ENCODE measurements at regions of chr2 and their contacts with region 1.

Region 1: DNA sequence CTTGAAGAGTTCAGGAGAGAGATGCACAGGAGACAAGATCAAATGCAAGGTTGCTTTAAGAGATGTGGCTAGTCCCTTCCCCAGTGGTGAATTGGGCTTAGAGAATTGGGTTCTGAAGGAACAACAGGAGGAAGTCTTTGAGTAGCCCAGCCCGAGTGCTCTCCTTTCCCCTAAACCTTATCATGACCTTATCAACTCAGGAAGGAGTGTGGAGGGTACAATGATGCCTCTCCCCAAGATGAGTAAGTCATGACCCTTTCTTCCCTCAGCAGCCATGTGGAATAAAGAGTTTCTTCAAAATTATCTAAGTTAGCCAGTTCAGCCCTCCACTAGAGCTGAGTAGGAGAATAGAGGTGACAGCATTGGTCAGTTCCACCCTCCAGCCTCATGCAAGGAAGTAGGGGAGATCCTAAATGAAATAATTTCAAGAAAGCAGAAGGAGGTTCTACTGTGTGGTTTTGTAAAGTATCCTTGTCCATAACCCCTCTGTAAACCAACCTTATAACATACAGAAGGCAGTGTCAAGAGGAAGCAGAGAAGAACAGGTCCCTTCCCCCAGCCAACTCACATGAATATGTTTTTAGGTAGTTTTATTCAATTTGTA is 88.4 kb downstream of the ARHGAP15 start:
- DNase-seq: no peak
- H3K4me3 ChIP-seq: no peak overlapping the region
- H3K4me3 Mint-ChIP-seq: no peak overlapping the region
- H3K27ac Mint-ChIP-seq: no peak overlapping the region
- H3K4me1 ChIP-seq: no peaks in the 10 kb centered on the region
- H3K4me1 Mint-ChIP-seq: no peaks in the 10 kb centered on the region
- H3K27me3 ChIP-seq: no peaks in the 10 kb centered on the region
- H3K27me3 Mint-ChIP-seq: peaks cover 2% of the 10 kb centered on the region
- CTCF ChIP-seq: no peak

Region 2: DNA sequence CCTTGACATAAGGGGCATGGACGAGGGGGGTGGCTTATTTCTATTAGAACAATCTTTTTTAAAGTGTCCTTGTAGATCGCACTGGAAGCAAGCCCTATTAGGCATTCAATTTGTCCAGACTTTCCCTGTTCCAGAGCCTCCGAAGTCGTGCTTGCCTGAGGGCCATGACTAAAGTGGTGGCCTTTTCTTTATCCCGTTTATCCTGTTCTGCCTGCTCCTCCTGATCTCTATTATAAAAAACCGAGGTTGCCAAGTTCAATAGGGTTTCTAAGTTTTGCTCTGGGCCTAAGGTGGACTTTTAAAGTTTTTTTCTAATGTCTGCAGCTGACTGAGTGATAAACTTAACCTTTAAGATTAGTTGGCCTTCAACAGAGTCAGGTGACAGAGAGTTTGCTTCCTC is 313.8 kb before region 1 on chr2:
- CTCF ChIA-PET with region 1: no interaction called
- POLR2A ChIA-PET with region 1: no interaction called
- intact Hi-C with region 1: no loop called
- DNase-seq: no peak
- H3K4me3 ChIP-seq: no peak overlapping the region
- H3K4me3 Mint-ChIP-seq: no peak overlapping the region
- H3K27ac Mint-ChIP-seq: no peak overlapping the region
- H3K4me1 ChIP-seq: no peaks in the 10 kb centered on the region
- H3K4me1 Mint-ChIP-seq: no peaks in the 10 kb centered on the region
- H3K27me3 ChIP-seq: no peaks in the 10 kb centered on the region
- H3K27me3 Mint-ChIP-seq: no peaks in the 10 kb centered on the region
- CTCF ChIP-seq: no peak

Region 3: DNA sequence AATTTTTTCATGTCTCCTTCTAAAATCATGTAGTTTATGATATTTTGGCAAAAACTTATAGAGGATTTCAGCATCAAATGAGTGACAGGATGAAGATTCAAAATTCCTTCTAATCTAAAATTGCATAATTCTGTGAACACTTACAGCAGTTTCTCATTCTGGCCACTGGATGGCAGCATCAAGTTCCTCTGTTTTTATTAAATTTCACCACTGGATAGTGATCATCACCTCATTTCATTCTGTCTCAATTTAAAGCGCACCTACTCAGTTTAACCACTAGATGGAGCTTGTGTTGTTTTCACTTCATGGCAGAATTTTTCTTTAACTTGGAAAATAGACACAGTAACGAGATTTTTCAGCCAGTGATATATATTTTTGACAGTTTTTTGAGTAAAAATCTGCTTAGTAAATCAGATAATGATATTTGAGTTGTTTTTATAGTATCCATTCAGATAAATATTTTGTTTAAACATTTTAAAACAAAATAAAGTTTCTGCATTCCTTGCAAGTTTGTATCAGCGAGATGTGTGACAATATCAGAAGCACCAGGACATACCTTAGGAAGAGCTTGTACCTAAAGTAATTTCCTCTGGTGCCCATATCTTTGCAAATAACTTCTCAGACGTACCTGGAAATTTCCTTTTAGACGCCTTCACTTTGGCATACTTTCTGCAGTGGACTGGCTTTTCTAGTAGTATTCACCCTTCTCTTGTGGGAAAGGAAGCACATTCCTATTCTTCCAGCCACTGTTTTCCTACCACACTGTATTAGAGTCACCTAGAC is 183.1 kb before region 1 on chr2:
- CTCF ChIA-PET with region 1: no interaction called
- POLR2A ChIA-PET with region 1: no interaction called
- intact Hi-C with region 1: loop called (anchors 1 kb)
- DNase-seq: peak; percentile 61 to 69
- H3K4me3 ChIP-seq: no peak overlapping the region
- H3K4me3 Mint-ChIP-seq: no peak overlapping the region
- H3K27ac Mint-ChIP-seq: no peak overlapping the region
- H3K4me1 ChIP-seq: peaks cover 12% of the 10 kb centered on the region
- H3K4me1 Mint-ChIP-seq: peaks cover 10% of the 10 kb centered on the region
- H3K27me3 ChIP-seq: no peaks in the 10 kb centered on the region
- H3K27me3 Mint-ChIP-seq: no peaks in the 10 kb centered on the region
- CTCF ChIP-seq: peak; percentile 93

Region 4: DNA sequence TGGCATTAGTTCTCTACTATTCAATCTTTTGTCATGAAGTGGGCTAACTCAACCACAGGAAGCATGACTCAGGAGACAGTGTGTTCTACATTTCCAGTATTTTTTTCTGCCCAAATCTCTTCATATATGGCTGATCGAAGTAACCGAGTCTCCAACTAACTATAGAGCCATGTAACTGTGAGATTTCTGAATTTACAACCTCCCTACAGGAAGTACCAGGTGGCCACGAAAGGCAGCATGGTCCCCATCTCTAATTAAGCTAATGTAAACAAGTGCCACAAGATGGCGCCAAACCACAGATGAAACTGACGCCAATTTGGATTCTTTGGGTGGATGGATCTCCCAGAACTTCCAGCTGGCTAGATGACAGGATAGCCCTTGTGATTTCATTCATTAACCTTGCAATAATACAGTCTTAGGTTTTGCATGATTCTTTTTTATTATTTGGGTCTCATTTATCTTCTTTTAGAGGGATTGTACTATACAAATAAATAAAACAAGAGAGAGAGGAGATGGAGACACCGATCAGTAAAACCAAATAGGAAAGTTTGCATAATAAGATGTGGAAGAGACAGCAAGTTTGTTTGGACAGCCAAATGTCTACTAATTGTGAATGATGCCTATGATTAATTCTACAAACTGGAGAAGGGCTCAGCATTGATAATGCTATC is 106.7 kb before region 1 on chr2:
- CTCF ChIA-PET with region 1: interaction called, 3 read pairs
- POLR2A ChIA-PET with region 1: no interaction called
- intact Hi-C with region 1: loop called (anchors 1 kb)
- DNase-seq: peak; percentile 43 to 59
- H3K4me3 ChIP-seq: no peak overlapping the region
- H3K4me3 Mint-ChIP-seq: no peak overlapping the region
- H3K27ac Mint-ChIP-seq: no peak overlapping the region
- H3K4me1 ChIP-seq: no peaks in the 10 kb centered on the region
- H3K4me1 Mint-ChIP-seq: no peaks in the 10 kb centered on the region
- H3K27me3 ChIP-seq: no peaks in the 10 kb centered on the region
- H3K27me3 Mint-ChIP-seq: peaks cover 8% of the 10 kb centered on the region
- CTCF ChIP-seq: peak; percentile 66 to 72

Region 5: DNA sequence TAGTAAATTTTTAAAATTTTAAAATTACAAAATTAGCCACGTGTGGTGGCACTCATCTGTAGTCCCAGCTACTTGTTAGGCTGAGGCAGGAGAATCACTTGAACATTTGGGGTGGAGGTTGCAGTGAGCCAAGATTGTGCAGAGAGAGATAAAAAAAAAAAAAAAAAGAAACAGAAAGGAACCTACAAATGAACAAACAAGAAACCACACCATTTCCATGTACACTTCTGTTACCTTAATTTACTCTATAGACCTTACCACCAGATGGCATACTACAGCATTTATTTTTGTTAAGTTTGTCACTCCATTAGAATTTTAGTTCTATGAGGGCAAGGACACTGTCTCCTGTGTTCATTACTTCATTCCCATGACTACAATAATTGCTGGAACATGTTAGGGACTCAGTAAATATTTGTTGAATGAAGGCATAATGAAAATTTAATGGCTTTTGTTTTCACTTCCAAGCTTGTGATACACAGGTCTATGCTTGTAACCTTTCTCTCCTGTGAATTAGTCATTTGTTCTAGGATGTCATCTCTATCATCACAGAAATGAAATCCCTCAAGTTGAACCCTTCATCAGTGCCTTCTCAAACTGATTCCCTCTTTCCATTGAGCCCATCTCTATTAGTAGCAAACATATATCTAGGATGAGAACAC is 12.4 kb before region 1 on chr2:
- CTCF ChIA-PET with region 1: no interaction called
- POLR2A ChIA-PET with region 1: no interaction called
- intact Hi-C with region 1: loop called (anchors 2 kb)
- DNase-seq: no peak
- H3K4me3 ChIP-seq: no peak overlapping the region
- H3K4me3 Mint-ChIP-seq: no peak overlapping the region
- H3K27ac Mint-ChIP-seq: no peak overlapping the region
- H3K4me1 ChIP-seq: no peaks in the 10 kb centered on the region
- H3K4me1 Mint-ChIP-seq: no peaks in the 10 kb centered on the region
- H3K27me3 ChIP-seq: no peaks in the 10 kb centered on the region
- H3K27me3 Mint-ChIP-seq: peaks cover 14% of the 10 kb centered on the region
- CTCF ChIP-seq: peak; percentile 25 to 39

Region 6: DNA sequence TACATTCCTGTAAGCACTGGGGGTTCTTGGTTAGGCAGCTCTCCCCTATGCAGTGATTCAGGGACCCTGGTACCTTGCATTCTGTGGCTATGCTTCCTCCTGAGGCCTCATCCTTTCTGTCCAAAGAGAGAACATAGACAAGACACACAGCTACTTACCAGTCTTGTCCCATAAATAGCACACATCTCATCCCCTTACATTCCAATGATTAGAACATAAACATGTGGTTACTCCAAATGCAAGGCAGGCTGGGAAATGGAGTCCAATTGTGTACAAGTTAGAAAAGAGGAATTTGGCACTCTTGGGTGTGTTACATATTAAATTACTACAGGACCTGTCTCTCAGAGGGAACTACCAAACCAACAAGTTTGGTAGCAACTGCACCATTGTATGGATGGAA is 82.9 kb after region 1 on chr2:
- CTCF ChIA-PET with region 1: no interaction called
- POLR2A ChIA-PET with region 1: no interaction called
- intact Hi-C with region 1: no loop called
- DNase-seq: no peak
- H3K4me3 ChIP-seq: no peak overlapping the region
- H3K4me3 Mint-ChIP-seq: no peak overlapping the region
- H3K27ac Mint-ChIP-seq: no peak overlapping the region
- H3K4me1 ChIP-seq: no peaks in the 10 kb centered on the region
- H3K4me1 Mint-ChIP-seq: no peaks in the 10 kb centered on the region
- H3K27me3 ChIP-seq: no peaks in the 10 kb centered on the region; the same call in 1 of the 2 replicates
- H3K27me3 Mint-ChIP-seq: no peaks in the 10 kb centered on the region
- CTCF ChIP-seq: no peak

Measured in Caco-2 (cell line).